WTC11 (cell line): ENCODE measurements at regions of chr7 and their contacts with region 1.

Region 1: GRCh38 chr7:1432411-1433082 is 26.7 kb downstream of the MICALL2 start:
- DNase-seq: peak; percentile 89
- ATAC-seq: peak; percentile 82
- H3K4me3 Mint-ChIP-seq: no peak overlapping the region
- H3K27ac Mint-ChIP-seq: no peak overlapping the region
- H3K4me1 Mint-ChIP-seq: no peaks in the 10 kb centered on the region; the same call in 1 of the 2 replicates
- H3K27me3 Mint-ChIP-seq: no peaks in the 10 kb centered on the region; the same call in 1 of the 2 replicates
- CTCF ChIP-seq: peak; percentile 95

Region 2: GRCh38 chr7:1181640-1182039 is 250.9 kb before region 1 on chr7:
- CTCF ChIA-PET with region 1: interaction called, 20 read pairs
- POLR2A ChIA-PET with region 1: no interaction called
- DNase-seq: no peak
- ATAC-seq: no peak
- H3K4me3 Mint-ChIP-seq: no peak overlapping the region
- H3K27ac Mint-ChIP-seq: no peak overlapping the region
- H3K4me1 Mint-ChIP-seq: no peaks in the 10 kb centered on the region
- H3K27me3 Mint-ChIP-seq: peaks cover 9% of the 10 kb centered on the region
- CTCF ChIP-seq: no peak

Region 3: DNA sequence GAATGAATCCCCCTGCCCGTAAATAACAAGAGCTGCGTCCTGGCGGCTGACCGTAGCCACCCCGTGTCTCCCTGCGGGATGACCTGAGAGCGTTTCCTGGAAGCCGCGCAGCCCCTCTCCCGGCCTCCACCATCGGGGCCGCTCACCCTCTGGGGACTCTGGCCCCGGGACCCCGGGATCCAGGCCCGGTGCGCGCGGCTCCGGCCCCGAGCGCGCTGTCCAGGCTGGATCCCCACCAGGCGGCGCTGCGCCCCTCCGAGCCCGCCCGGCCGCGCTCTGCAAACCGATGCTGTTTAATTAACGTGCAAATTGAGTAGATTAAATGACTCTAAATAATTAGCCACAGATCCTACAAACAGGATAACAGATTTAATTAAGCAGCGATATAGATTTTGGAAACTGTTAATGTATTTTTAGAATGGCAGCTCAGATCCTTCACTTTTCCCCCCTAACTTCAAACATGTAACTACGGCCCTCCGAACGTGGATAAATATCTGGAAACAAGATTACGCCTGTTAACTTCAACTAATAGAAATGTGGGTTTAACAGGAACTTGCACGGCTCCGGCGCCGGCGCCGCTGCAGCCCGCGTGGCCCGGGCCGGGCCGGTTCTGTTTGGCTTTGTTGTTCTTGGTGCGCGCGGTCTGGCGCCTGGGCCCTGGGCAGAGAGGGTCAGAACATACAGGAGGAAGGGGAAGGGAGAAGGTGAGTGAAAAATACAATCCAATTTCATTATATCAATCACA is 206.9 kb before region 1 on chr7:
- CTCF ChIA-PET with region 1: interaction called, 13 read pairs
- POLR2A ChIA-PET with region 1: no interaction called
- DNase-seq: peak; percentile 68
- ATAC-seq: peak; percentile 13; the same call in 1 of the 2 replicates
- H3K4me3 Mint-ChIP-seq: peak overlapping the region; percentile 52
- H3K27ac Mint-ChIP-seq: no peak overlapping the region
- H3K4me1 Mint-ChIP-seq: peaks cover 33% of the 10 kb centered on the region
- H3K27me3 Mint-ChIP-seq: peaks cover 95% of the 10 kb centered on the region
- CTCF ChIP-seq: peak; percentile 82

Region 4: GRCh38 chr7:1403638-1404459 is 28.7 kb before region 1 on chr7:
- CTCF ChIA-PET with region 1: interaction called, 12 read pairs
- POLR2A ChIA-PET with region 1: no interaction called
- DNase-seq: peak; percentile 38
- ATAC-seq: peak; percentile 55
- H3K4me3 Mint-ChIP-seq: peak overlapping the region; percentile 71
- H3K27ac Mint-ChIP-seq: no peak overlapping the region
- H3K4me1 Mint-ChIP-seq: peaks cover 11% of the 10 kb centered on the region
- H3K27me3 Mint-ChIP-seq: peaks cover 41% of the 10 kb centered on the region
- CTCF ChIP-seq: no peak

Region 5: DNA sequence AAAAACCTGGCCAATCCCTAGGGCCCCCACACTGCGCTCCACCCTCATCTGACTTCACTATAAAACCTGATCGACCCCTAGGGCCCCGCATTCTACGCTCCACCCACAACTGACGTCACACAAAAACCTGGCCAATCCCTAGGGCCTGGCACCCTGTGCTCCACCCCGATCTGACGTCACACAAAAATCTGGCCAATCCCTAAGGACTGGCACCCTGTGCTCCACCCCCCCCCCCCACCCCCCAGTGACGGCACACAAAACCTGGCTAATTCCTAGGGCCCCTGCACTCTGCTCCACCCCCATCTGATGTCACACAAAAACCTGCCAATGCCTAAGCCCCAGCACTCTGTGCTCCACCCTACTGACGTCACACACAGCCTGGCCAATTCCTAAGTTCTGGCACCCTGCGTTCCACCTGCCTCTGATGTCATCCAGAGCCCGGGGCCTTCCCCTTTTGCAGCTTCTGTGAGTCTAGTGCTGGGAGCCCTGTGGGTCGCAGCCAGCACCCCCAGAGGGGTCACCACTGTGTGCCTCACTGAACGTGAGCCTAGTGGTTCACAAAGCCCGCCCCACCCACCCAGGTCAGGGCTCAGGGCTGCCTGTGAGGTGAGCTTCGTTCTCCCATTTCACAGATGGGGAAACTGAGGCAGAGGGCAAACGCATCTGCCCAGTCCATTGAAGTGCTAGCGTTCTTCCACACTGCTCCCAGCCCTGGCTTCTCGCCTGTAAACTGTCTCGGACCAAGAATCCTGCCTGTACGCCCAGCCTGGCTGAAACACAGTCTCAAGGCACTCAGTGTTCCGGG is 13.8 kb before region 1 on chr7:
- CTCF ChIA-PET with region 1: interaction called, 25 read pairs
- POLR2A ChIA-PET with region 1: no interaction called
- DNase-seq: peak; percentile 79
- ATAC-seq: peak; percentile 74
- H3K4me3 Mint-ChIP-seq: no peak overlapping the region
- H3K27ac Mint-ChIP-seq: peak overlapping the region; percentile 41
- H3K4me1 Mint-ChIP-seq: peaks cover 12% of the 10 kb centered on the region
- H3K27me3 Mint-ChIP-seq: peaks cover 4% of the 10 kb centered on the region
- CTCF ChIP-seq: no peak

Region 6: GRCh38 chr7:1459522-1459892 is 27.0 kb after region 1 on chr7:
- CTCF ChIA-PET with region 1: interaction called, 28 read pairs
- POLR2A ChIA-PET with region 1: no interaction called
- DNase-seq: peak; percentile 100
- ATAC-seq: peak; percentile 96
- H3K4me3 Mint-ChIP-seq: no peak overlapping the region
- H3K27ac Mint-ChIP-seq: no peak overlapping the region
- H3K4me1 Mint-ChIP-seq: peaks cover 16% of the 10 kb centered on the region
- H3K27me3 Mint-ChIP-seq: no peaks in the 10 kb centered on the region
- CTCF ChIP-seq: no peak